ENCODE measurements at regions of chr6 and their contacts with region 1.

Region 1: GRCh38 chr6:5723841-5724691 is 282.7 kb downstream of the NRN1 start:
- DNase-seq: peak; percentile 92
- ATAC-seq: peak; percentile 89
- H3K4me3 ChIP-seq: peak overlapping the region; percentile 56 to 79 (median 75)
- H3K4me3 Mint-ChIP-seq: peak overlapping the region; percentile 99
- H3K27ac ChIP-seq: peak overlapping the region; percentile 98 to 99
- H3K27ac Mint-ChIP-seq: peak overlapping the region; percentile 100
- H3K4me1 ChIP-seq: peaks cover 59 to 75% of the 10 kb centered on the region in 2 donors
- H3K4me1 Mint-ChIP-seq: peaks cover 76% of the 10 kb centered on the region
- H3K27me3 ChIP-seq: no peaks in the 10 kb centered on the region
- H3K27me3 Mint-ChIP-seq: no peaks in the 10 kb centered on the region
- CTCF ChIP-seq: no peak

Region 2: DNA sequence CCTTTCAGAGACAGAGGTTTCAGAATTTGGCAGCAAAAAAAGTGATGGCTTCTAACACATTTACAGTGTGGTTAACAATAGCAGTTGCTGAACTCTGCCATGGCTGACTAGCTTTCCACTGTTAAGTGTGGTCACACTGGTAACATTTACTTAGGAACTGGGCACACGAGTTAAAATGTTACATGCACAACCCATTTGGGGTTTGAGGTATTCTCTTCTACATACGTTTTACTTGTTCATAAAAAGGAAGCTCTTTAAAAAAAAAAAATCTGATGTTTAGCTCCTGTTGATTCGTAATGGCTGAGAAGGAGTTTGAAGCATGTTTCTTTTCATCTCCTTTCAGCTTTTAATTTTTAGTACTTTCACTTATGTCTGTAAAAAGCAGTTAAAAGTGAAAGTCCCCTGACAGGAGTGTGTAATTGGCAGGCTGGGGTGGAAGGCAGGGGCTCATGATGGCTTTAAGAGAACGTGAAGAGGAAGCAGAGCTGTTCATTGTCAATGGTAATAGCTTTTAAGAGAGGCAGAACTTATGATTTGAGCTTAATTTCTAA is 216.9 kb before region 1 on chr6:
- CTCF ChIA-PET with region 1: no interaction called
- POLR2A ChIA-PET with region 1: no interaction called
- intact Hi-C with region 1: loop called (anchors 2 kb)
- DNase-seq: peak; percentile 46
- ATAC-seq: peak; percentile 72
- H3K4me3 ChIP-seq: peak overlapping the region in 3 of 5 experiments; percentile 21 to 55 (median 33)
- H3K4me3 Mint-ChIP-seq: peak overlapping the region; percentile 76
- H3K27ac ChIP-seq: peak overlapping the region; percentile 33 to 89
- H3K27ac Mint-ChIP-seq: peak overlapping the region; percentile 89
- H3K4me1 ChIP-seq: peaks cover 29 to 31% of the 10 kb centered on the region in 2 donors
- H3K4me1 Mint-ChIP-seq: peaks cover 38% of the 10 kb centered on the region
- H3K27me3 ChIP-seq: no peaks in the 10 kb centered on the region
- H3K27me3 Mint-ChIP-seq: no peaks in the 10 kb centered on the region
- CTCF ChIP-seq: no peak

Region 3: GRCh38 chr6:5665173-5665572 is 58.9 kb before region 1 on chr6:
- CTCF ChIA-PET with region 1: no interaction called
- POLR2A ChIA-PET with region 1: interaction called, 3 read pairs
- intact Hi-C with region 1: loop called (anchors 1 kb)
- DNase-seq: peak; percentile 73
- ATAC-seq: peak; percentile 99
- H3K4me3 ChIP-seq: peak overlapping the region in 1 of 5 experiments; percentile 17
- H3K4me3 Mint-ChIP-seq: peak overlapping the region; percentile 59
- H3K27ac ChIP-seq: peak overlapping the region; percentile 9 to 69
- H3K27ac Mint-ChIP-seq: peak overlapping the region; percentile 88
- H3K4me1 ChIP-seq: peaks cover 25 to 34% of the 10 kb centered on the region in 2 donors
- H3K4me1 Mint-ChIP-seq: peaks cover 52% of the 10 kb centered on the region
- H3K27me3 ChIP-seq: no peaks in the 10 kb centered on the region
- H3K27me3 Mint-ChIP-seq: no peaks in the 10 kb centered on the region
- CTCF ChIP-seq: no peak

Region 4: DNA sequence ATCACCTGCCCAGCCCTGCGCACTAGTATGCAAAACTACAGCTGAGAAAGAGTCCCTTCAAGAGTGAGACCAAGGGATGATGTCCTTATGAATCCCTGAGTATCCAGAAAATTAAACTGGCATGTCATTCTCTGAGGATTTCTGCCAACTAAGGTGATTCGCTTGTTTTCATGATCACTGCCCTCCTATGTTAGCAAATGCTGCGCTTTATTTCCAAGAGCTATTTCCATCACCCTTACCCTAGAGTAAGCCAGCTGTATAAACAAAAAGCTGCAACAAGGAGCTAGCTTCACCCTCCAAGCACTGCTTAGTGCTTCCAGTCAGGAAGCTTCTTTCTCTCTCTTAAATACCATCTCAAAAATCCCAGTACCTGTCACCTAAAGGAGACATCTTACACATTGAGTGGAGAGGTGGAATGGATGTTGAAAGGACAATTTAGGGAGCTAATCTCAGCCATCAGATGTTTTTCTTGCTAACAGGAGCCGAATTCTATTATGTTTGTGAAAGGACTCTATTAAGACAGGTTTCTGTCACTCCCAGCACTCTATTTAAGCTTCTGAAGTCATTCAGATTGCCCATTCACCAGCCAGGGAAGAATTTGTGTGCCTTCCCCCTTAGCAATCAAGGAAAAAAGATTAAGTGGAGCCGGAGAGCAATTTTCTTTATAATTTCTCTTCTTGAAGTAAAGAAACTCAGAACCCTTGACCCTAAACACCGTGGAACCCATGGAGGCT is 39.6 kb before region 1 on chr6:
- CTCF ChIA-PET with region 1: no interaction called
- POLR2A ChIA-PET with region 1: no interaction called
- intact Hi-C with region 1: loop called (anchors 5 kb)
- DNase-seq: no peak
- ATAC-seq: no peak
- H3K4me3 ChIP-seq: no peak overlapping the region
- H3K4me3 Mint-ChIP-seq: no peak overlapping the region
- H3K27ac ChIP-seq: no peak overlapping the region
- H3K27ac Mint-ChIP-seq: no peak overlapping the region
- H3K4me1 ChIP-seq: peaks cover 23 to 24% of the 10 kb centered on the region in 2 donors
- H3K4me1 Mint-ChIP-seq: peaks cover 24% of the 10 kb centered on the region
- H3K27me3 ChIP-seq: no peaks in the 10 kb centered on the region
- H3K27me3 Mint-ChIP-seq: no peaks in the 10 kb centered on the region
- CTCF ChIP-seq: no peak

Region 5: GRCh38 chr6:5827056-5827904 is 103.2 kb after region 1 on chr6:
- CTCF ChIA-PET with region 1: no interaction called
- POLR2A ChIA-PET with region 1: interaction called, 11 read pairs
- intact Hi-C with region 1: no loop called
- DNase-seq: no peak
- ATAC-seq: no peak
- H3K4me3 ChIP-seq: no peak overlapping the region
- H3K4me3 Mint-ChIP-seq: no peak overlapping the region
- H3K27ac ChIP-seq: no peak overlapping the region
- H3K27ac Mint-ChIP-seq: no peak overlapping the region
- H3K4me1 ChIP-seq: peaks cover 17 to 21% of the 10 kb centered on the region in 2 donors
- H3K4me1 Mint-ChIP-seq: peaks cover 21% of the 10 kb centered on the region
- H3K27me3 ChIP-seq: no peaks in the 10 kb centered on the region
- H3K27me3 Mint-ChIP-seq: no peaks in the 10 kb centered on the region
- CTCF ChIP-seq: no peak

Region 6: DNA sequence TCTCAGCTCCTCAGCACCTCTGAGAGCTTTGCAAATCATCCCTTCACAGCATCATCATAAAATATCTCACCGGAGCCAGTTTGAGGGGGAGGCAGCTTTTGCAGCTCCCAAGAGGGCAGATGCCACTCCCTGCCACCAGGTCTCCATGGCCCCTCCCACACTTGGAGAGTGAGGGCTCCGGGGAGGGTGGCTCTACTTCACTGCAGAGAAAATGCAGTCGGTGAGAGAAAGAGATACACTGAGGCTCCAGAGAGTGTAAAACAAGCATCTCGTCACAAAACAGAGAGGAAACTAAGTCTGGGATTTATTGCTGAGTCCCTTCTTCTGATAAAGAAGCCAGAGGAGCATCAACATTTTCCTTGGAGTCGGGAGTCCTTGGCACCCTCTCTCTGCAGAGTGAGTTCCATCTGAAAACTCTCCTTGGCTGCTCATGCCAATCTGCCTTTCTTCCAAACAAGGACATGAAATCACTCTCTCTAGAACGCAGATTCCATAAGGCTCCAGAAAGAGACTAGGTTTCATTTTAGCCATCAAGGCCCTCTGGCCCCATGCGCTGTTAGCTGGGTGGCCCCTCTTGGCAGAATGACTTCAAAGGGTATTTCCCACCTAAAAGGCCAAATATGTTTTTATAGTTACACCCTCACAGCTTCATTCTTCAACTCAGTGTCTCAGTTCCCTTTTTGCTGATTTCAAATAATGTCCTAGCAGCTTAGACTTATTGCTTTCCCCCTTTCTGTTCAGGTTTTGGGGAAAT is 667.0 kb after region 1 on chr6:
- CTCF ChIA-PET with region 1: no interaction called
- POLR2A ChIA-PET with region 1: no interaction called
- intact Hi-C with region 1: loop called (anchors 5 kb)
- DNase-seq: peak; percentile 81
- ATAC-seq: peak; percentile 75
- H3K4me3 ChIP-seq: peak overlapping the region in 3 of 5 experiments; percentile 3 to 36 (median 26)
- H3K4me3 Mint-ChIP-seq: peak overlapping the region; percentile 87
- H3K27ac ChIP-seq: peak overlapping the region; percentile 83 to 92
- H3K27ac Mint-ChIP-seq: peak overlapping the region; percentile 97
- H3K4me1 ChIP-seq: peaks cover 37 to 44% of the 10 kb centered on the region in 2 donors
- H3K4me1 Mint-ChIP-seq: peaks cover 58% of the 10 kb centered on the region
- H3K27me3 ChIP-seq: no peaks in the 10 kb centered on the region
- H3K27me3 Mint-ChIP-seq: peaks cover 3% of the 10 kb centered on the region
- CTCF ChIP-seq: no peak